Activated CD4-positive, alpha-beta T cell treated with anti-CD3 and anti-CD28 coated beads, Interleukin-2, amount 10 ng/mL, durations not matched to agents 7 days and 5 days (primary cell): ENCODE measurements at regions of chr6 and their contacts with region 1.

Region 1: GRCh38 chr6:122471107-122472021 is at the start of gene SERINC1:
- DNase-seq: peak; percentile 95
- H3K4me3 Mint-ChIP-seq: peak within 1 kb of the TSS; percentile 92
- H3K27ac Mint-ChIP-seq: peak within 1 kb of the TSS; percentile 99
- H3K4me1 Mint-ChIP-seq: peaks cover 31% of the 10 kb centered on the region
- H3K27me3 Mint-ChIP-seq: no peaks in the 10 kb centered on the region
- total RNA-seq, gene SERINC1: 61.0 to 63.1 TPM

Region 2: GRCh38 chr6:122388945-122389344 is 82.4 kb before region 1 on chr6:
- CTCF ChIA-PET with region 1: no interaction called
- POLR2A ChIA-PET with region 1: no interaction called
- DNase-seq: no peak
- H3K4me3 Mint-ChIP-seq: no peak overlapping the region
- H3K27ac Mint-ChIP-seq: no peak overlapping the region
- H3K4me1 Mint-ChIP-seq: peaks cover 2% of the 10 kb centered on the region
- H3K27me3 Mint-ChIP-seq: peaks cover 1% of the 10 kb centered on the region

Region 3: DNA sequence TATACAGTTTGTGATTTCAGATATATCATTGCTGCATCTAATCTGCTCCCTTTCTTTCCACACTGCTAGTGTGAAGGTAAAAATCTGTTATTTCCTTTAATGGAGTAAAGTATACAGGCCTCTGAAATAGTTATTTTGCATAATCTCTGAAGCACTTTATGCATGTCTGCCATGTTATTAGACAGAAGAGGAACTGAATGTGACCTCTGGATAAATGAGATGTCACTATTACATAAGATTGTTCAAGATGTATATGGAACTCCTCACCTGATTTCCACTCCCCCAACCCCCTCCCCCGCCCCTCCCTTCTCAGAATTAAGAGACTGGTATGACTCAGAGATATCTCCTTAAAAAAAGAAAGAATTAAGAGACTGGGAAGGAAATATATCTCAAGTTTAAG is 26.1 kb before region 1 on chr6:
- CTCF ChIA-PET with region 1: interaction called, 10 read pairs
- POLR2A ChIA-PET with region 1: no interaction called
- DNase-seq: no peak
- H3K4me3 Mint-ChIP-seq: no peak overlapping the region
- H3K27ac Mint-ChIP-seq: no peak overlapping the region
- H3K4me1 Mint-ChIP-seq: peaks cover 2% of the 10 kb centered on the region
- H3K27me3 Mint-ChIP-seq: no peaks in the 10 kb centered on the region

Region 4: DNA sequence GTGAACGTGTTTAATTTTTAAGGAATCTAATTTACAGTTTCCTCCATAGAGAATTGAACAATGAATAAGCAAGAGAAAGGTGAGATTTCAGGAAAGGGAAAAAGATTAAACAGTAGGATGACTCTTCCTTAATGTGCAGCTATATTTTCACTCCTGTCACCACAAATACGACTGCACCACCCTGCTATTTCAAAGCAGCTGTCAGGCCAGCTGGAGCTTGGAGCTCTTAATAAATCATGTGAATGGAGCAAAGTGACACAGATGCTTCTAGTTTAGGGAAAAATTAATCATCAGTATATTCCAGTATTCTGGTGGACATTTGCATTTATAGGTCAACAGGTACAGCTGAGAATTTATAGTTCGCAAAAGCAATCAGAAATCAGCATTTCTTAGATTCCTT is 82.3 kb after region 1 on chr6:
- CTCF ChIA-PET with region 1: no interaction called
- POLR2A ChIA-PET with region 1: no interaction called
- DNase-seq: no peak
- H3K4me3 Mint-ChIP-seq: no peak overlapping the region
- H3K27ac Mint-ChIP-seq: no peak overlapping the region
- H3K4me1 Mint-ChIP-seq: no peaks in the 10 kb centered on the region
- H3K27me3 Mint-ChIP-seq: peaks cover 3% of the 10 kb centered on the region